Activated CD4-positive, alpha-beta memory T cell treated with anti-CD3 and anti-CD28 coated beads for 36 hours (primary cell): ENCODE measurements at regions of chr3 and their contacts with region 1.

Region 1: DNA sequence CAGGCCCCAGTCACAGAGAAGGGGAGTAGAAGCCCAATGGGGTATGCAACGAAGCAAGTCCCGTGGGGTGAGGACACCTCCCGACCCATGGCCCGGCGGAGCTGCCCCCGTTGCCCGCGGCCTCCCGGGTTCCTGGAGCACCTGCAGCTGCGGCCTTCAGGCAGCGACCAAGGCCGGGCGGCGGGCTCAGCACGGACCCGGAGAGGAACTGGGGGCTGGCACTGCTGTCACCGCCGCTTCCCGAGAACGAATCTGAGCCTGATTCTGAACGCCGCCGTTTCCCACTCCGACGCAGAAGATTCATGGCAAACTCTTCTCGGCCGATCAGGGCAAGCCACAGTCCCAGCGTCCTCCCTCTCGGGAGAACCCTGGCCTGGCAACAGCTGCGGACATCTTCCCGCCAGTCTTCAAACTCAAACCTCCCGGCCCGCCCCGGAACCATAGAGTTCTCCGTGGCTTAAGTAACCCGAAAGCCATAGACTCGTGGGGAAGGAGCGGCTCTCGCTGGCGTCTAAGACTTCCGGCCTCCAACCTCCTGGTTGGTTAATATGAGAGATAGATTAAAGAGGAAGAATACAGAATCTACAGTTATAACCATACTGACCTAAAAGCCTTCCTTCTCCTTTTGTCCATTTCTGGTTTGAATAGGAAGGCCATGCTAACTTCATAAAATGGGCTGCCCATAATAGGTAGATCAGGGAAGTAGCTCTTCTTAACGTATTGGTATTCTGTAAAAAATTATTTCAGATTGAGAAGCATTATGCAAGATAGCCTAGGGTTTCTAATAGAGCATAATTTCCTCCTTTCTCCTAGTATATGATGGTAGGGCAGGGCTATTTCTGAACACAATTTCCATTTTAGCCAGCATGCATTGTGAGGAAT is at the start of gene POLQ:
- DNase-seq: peak; percentile 93
- H3K4me3 Mint-ChIP-seq: peak within 1 kb of the TSS; percentile 86
- H3K27ac Mint-ChIP-seq: peak within 1 kb of the TSS; percentile 92
- H3K4me1 Mint-ChIP-seq: peaks cover 6% of the 10 kb centered on the region
- H3K27me3 Mint-ChIP-seq: no peaks in the 10 kb centered on the region
- total RNA-seq, gene POLQ: 23.9 to 25.1 TPM

Region 2: GRCh38 chr3:121660356-121661171 is 114.7 kb after region 1 on chr3 and contains the start of gene HCLS1:
- CTCF ChIA-PET with region 1: interaction called, 11 read pairs
- POLR2A ChIA-PET with region 1: no interaction called
- intact Hi-C with region 1: loop called (anchors 1 kb)
- DNase-seq: peak; percentile 83
- H3K4me3 Mint-ChIP-seq: peak within 1 kb of the TSS; percentile 97
- H3K27ac Mint-ChIP-seq: peak within 1 kb of the TSS; percentile 100
- H3K4me1 Mint-ChIP-seq: peaks cover 47% of the 10 kb centered on the region
- H3K27me3 Mint-ChIP-seq: no peaks in the 10 kb centered on the region
- total RNA-seq, gene HCLS1: 249 to 251 TPM

Region 3: GRCh38 chr3:121834696-121835464 is 289.1 kb after region 1 on chr3 and contains the starts of genes EAF2 and IQCB1:
- CTCF ChIA-PET with region 1: no interaction called
- POLR2A ChIA-PET with region 1: interaction called, 3 read pairs
- intact Hi-C with region 1: loop called (anchors 1 kb)
- DNase-seq: peak; percentile 98
- H3K4me3 Mint-ChIP-seq: peak within 1 kb of the TSS; percentile 98
- H3K27ac Mint-ChIP-seq: peak within 1 kb of the TSS; percentile 84
- H3K4me1 Mint-ChIP-seq: peaks cover 37% of the 10 kb centered on the region
- H3K27me3 Mint-ChIP-seq: no peaks in the 10 kb centered on the region
- total RNA-seq, gene EAF2: 14.4 to 14.8 TPM
- total RNA-seq, gene IQCB1: 36.8 to 37.3 TPM

Region 4: GRCh38 chr3:122092460-122093165 is 546.8 kb after region 1 on chr3:
- CTCF ChIA-PET with region 1: interaction called, 3 read pairs
- POLR2A ChIA-PET with region 1: no interaction called
- intact Hi-C with region 1: loop called (anchors 1 kb)
- DNase-seq: peak; percentile 86
- H3K4me3 Mint-ChIP-seq: no peak overlapping the region
- H3K27ac Mint-ChIP-seq: peak overlapping the region; percentile 59
- H3K4me1 Mint-ChIP-seq: peaks cover 34% of the 10 kb centered on the region
- H3K27me3 Mint-ChIP-seq: no peaks in the 10 kb centered on the region

Region 5: GRCh38 chr3:122299872-122300460 is 754.2 kb after region 1 on chr3:
- CTCF ChIA-PET with region 1: interaction called, 10 read pairs
- POLR2A ChIA-PET with region 1: no interaction called
- intact Hi-C with region 1: loop called (anchors 1 kb)
- DNase-seq: no peak
- H3K4me3 Mint-ChIP-seq: no peak overlapping the region
- H3K27ac Mint-ChIP-seq: no peak overlapping the region
- H3K4me1 Mint-ChIP-seq: peaks cover 18% of the 10 kb centered on the region
- H3K27me3 Mint-ChIP-seq: no peaks in the 10 kb centered on the region

Region 6: DNA sequence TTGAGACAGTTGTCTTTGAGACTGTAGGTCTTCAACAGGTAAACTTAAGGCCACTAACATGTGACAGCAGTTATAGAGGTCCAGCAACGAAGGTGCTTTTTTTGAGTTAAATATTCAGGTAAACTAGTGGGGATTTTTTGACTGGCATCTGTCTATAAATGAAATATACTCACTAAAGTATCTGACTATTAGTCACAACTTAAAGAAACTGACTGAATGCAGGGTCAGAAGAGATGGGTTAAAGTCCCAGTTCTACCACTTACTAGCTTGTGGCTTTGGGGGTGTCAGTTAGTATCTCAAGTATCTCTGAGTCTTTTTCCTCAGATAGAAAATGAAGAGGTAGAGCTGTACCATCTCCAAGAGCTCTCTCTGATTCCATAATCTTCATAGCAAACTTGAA is 819.3 kb after region 1 on chr3:
- CTCF ChIA-PET with region 1: no interaction called
- POLR2A ChIA-PET with region 1: no interaction called
- intact Hi-C with region 1: loop called (anchors 2 kb)
- DNase-seq: no peak
- H3K4me3 Mint-ChIP-seq: no peak overlapping the region
- H3K27ac Mint-ChIP-seq: peak overlapping the region; percentile 94
- H3K4me1 Mint-ChIP-seq: peaks cover 26% of the 10 kb centered on the region
- H3K27me3 Mint-ChIP-seq: no peaks in the 10 kb centered on the region

Region 7: DNA sequence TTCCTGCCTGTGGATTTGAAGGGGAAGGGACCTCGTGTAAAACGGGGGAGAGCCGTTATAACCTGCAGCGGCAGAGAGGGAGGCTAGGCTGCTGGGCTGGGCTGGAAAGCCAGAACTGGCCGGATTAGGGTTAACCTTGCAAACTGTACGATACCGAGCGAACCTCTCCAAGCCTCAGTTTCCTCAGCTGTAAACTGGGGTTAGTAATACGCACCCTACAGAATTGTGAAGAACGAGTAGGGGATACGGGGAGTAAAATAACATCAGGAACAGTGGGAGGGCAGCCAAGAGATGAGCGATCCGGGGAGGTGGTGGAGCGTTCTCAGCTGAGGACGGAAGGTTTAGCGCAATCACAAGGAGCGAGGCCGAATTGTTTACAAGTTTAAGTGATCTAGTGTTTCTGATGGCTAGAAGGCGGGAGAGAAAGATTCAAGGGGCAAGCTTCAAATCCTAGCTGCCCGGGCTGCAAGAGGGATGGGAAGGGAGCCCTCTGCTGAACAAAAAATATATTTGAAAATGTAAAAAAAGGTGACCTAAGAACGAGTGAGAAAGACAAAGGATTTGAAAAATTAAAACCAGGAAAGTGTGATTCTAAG is 1482.5 kb after region 1 on chr3:
- CTCF ChIA-PET with region 1: interaction called, 28 read pairs
- POLR2A ChIA-PET with region 1: no interaction called
- intact Hi-C with region 1: loop called (anchors 5 kb)
- DNase-seq: peak; percentile 28
- H3K4me3 Mint-ChIP-seq: peak overlapping the region; percentile 36
- H3K27ac Mint-ChIP-seq: no peak overlapping the region
- H3K4me1 Mint-ChIP-seq: peaks cover 12% of the 10 kb centered on the region
- H3K27me3 Mint-ChIP-seq: peaks cover 53% of the 10 kb centered on the region